ENCODE measurements at regions of chr20 and their contacts with region 1.

Region 1: GRCh38 chr20:5126512-5127203 is at the start of gene CDS2:
- DNase-seq: peak; percentile 82
- H3K4me3 ChIP-seq: peak within 1 kb of the TSS; percentile 80
- CTCF ChIP-seq: peak; percentile 88

Region 2: DNA sequence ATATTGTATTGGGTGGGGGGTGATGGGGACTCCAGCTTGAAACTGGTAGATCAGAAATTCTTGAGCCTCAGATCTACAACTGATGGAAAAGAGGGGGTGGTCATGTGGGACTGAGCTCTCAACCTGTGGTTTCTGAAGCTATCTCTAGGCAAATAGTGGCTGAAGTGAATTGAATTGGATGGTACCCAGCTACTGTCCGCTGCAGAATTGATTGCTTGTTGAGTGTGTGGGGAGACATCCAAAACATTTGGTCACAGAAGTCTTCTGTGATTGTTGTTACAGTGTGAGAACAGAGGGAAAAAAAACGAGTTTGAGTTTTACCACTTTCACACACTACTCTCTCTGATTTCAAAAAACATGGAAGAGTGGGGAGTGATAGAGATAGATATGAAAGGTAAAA is 15.0 kb after region 1 on chr20:
- CTCF ChIA-PET with region 1: interaction called, 15 read pairs
- POLR2A ChIA-PET with region 1: no interaction called
- DNase-seq: no peak
- H3K4me3 ChIP-seq: no peak overlapping the region
- CTCF ChIP-seq: no peak

Region 3: DNA sequence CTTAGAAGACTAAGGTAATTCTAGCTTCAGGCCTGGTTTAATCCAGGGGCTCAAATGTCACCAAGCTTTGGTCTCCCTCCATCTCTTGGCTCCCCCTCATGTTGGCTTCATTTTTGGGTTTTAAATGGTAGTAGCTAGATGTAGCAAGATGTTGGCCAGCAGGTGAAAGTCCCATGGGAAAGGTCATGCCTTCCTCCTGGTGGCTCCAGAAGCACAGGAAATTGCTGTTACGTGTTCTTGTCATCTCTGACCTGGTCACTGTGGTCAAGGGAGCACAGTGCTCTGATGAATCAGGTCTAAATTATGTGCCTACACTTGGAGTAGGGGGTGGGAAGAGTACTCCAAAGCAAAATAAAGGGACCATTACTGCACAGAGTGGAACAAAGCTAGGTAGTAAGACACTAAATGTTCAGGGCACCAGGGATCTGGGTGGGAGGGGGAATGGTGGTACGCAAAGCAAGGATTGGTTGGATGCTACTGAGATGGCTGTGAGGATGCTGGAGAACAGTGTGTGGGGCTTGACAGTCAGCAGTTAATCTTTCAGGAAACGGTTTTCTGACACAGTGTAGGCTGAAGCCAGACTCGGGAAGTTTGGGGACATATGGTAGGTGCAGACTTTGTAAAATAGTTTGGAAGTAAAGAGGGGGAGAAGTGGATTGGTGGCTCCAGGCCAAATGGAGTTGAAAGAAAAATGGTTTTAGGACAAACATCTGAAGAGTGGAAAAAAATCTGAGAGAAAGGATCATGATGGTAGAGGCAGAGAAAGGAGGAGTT is 30.2 kb after region 1 on chr20:
- CTCF ChIA-PET with region 1: interaction called, 10 read pairs
- POLR2A ChIA-PET with region 1: no interaction called
- DNase-seq: no peak
- H3K4me3 ChIP-seq: no peak overlapping the region
- CTCF ChIP-seq: no peak

Region 4: DNA sequence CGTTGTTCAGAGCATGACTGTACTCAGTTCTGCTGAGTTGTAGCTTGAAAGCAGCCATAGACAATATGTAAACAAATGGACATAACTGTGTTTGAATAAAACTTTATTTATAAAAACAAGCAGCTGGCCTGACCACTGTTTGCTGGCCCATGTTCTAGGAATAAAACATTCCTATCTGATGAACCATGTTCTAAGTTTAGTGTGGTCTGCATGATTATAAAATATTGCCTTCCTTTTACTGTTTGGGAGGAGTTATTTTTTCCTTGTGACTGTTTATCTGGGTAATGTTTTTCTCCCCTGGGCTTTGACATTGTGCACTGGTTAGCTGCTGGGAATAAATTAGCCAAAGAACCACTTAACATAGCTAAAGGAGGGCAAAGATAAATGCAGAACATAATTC is 55.3 kb after region 1 on chr20:
- CTCF ChIA-PET with region 1: interaction called, 372 read pairs
- POLR2A ChIA-PET with region 1: interaction called, 3 read pairs
- DNase-seq: no peak
- H3K4me3 ChIP-seq: no peak overlapping the region
- CTCF ChIP-seq: no peak

Region 5: GRCh38 chr20:5205348-5206210 is 78.9 kb after region 1 on chr20:
- CTCF ChIA-PET with region 1: interaction called, 72 read pairs
- POLR2A ChIA-PET with region 1: no interaction called
- DNase-seq: no peak
- H3K4me3 ChIP-seq: no peak overlapping the region
- CTCF ChIP-seq: peak; percentile 95

Region 6: DNA sequence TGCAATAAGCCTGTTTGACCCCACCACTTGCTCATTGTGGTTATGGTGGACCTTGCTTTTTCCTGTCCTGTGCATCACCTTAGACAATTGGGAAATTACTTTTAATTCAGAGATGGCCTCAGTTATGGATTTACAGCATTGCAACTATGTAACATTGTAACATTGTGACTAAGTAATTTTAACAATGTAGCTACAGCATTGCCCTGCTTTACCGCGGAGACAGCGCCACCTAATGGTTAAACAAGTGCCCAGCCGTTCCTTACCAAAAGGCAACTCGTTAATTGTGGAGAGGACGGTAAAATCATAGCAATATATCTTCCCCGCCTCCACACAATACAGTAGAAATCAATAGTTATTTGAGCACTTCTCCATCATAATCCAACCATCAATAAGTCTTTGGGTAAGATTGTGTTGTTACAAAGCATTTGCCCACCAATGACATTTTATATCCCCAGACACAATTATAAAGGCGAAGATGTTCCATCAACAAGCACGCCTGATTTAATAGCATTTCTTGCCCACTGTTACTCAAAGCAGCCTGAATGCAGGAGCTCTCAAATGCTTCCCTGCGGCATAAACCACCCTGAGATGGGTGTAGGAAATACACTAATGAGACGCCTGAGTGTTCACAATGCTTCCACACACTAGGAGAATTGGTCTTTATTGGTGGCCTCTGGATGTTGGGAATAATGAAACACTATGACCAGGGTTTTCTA is 96.4 kb after region 1 on chr20:
- CTCF ChIA-PET with region 1: interaction called, 38 read pairs
- POLR2A ChIA-PET with region 1: no interaction called
- DNase-seq: peak; percentile 4
- H3K4me3 ChIP-seq: no peak overlapping the region
- CTCF ChIP-seq: peak; percentile 88

Region 7: GRCh38 chr20:5448449-5449118 is 321.9 kb after region 1 on chr20:
- CTCF ChIA-PET with region 1: interaction called, 19 read pairs
- POLR2A ChIA-PET with region 1: no interaction called
- DNase-seq: no peak
- H3K4me3 ChIP-seq: no peak overlapping the region
- CTCF ChIP-seq: peak; percentile 64